A673 (cell line): ENCODE measurements at regions of chr12 and their contacts with region 1.

Region 1: DNA sequence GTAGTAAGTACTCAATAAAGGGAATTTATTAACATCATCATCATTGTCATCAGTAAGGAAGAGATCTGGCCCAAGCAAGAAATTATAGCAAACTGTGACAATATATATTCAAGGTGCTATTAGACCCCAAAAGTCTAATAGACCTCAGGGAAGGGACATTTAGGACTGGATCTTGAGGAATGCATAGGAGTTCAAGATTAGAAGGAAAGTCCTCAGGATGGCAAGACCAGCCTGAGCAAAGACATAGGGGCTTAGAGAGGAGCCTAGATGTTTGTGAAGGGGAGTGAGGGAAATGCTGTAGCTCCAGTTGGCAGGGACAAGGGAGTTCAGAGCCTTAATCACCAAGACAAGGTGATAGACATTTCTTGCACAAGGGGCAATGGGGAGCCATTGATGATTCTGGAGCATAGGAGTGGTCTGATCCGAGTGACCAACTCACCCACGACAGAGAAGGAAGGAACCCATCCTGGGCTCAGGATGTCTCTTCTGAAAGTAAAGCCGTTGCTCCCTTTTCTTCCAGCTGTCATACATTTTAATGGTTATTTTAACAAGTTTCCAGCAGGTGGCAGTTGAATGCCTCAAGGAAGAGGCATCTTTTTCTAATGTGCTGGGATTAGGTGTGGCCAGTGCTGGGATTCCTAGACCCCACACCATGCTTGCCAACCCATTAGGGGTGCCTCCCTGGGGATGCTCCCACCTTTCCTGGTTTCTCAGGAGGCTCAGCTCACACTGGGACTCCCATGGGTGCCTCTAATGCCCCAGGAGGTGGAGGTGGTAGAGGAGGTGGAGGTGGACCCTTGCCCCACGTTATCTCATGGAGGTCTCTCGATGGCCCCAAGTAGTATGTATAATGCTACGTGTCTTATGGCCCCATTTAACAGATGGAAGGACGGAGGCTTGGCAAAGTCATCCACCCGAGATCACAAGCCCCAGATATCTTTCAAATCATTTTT is 37.8 kb downstream of the PHETA1 start:
- DNase-seq: peak; percentile 83
- H3K4me3 ChIP-seq: no peak overlapping the region
- H3K27ac ChIP-seq: no peak overlapping the region
- H3K4me1 ChIP-seq: no peaks in the 10 kb centered on the region
- H3K27me3 ChIP-seq: no peaks in the 10 kb centered on the region
- CTCF ChIP-seq: peak; percentile 62

Region 2: GRCh38 chr12:111434680-111435338 is 103.7 kb after region 1 on chr12:
- CTCF ChIA-PET with region 1: no interaction called
- POLR2A ChIA-PET with region 1: no interaction called
- intact Hi-C with region 1: no loop called
- DNase-seq: peak; percentile 73
- H3K4me3 ChIP-seq: no peak overlapping the region
- H3K27ac ChIP-seq: peak overlapping the region; percentile 79
- H3K4me1 ChIP-seq: peaks cover 88% of the 10 kb centered on the region
- H3K27me3 ChIP-seq: no peaks in the 10 kb centered on the region
- CTCF ChIP-seq: no peak

Region 3: DNA sequence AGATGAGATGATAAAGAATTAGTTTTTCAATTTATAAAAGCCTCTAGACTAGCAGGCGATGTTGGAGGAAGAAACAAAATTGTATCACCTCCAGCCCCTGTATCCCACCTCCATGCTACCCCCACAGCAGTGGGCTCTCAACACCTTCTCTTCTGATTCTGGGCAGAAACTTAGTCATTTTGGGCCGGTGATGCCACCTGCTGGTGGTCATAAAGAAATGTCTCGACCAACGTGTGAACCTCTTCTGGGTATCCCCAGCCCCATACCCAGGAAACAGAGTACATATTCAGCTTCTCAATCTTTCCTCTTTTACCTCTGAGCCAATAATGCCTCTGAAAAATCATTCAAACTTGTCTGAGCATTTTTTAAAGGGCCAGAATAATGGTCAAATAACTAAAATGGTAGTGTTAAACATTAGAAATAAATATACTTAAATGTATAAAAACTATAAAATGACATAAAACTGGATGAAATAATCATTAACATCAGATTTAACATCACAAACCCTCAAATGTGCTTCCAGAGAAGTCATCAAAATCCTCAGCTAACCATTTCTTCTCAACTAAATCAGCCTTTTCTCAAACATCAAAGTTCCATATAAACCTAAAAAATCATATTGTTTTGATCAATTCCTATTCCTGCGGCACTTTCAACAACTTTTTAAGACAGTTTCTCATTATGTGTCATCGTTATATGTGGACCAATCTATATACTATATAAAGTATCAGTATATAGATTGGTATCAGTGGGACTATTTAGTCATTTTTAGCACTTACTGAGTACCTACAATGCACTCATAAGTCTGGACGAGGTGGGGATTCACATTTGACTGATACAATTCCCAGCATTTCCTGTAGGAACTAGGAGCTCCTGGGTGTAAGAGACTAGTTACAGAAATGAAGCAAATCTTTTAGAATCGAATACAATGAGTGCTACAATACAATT is 198.6 kb after region 1 on chr12:
- CTCF ChIA-PET with region 1: no interaction called
- POLR2A ChIA-PET with region 1: no interaction called
- intact Hi-C with region 1: loop called (anchors 1 kb)
- DNase-seq: peak; percentile 79
- H3K4me3 ChIP-seq: no peak overlapping the region
- H3K27ac ChIP-seq: no peak overlapping the region
- H3K4me1 ChIP-seq: peaks cover 4% of the 10 kb centered on the region
- H3K27me3 ChIP-seq: no peaks in the 10 kb centered on the region
- CTCF ChIP-seq: peak; percentile 81